Activated naive CD4-positive, alpha-beta T cell treated with anti-CD3 and anti-CD28 coated beads, Interleukin-2, amount 10 ng/mL, durations not matched to agents 7 days and 5 days (primary cell): ENCODE measurements at regions of chr2 and their contacts with region 1.

Region 1: GRCh38 chr2:30165050-30165520 is 18.3 kb downstream of the YPEL5 start:
- DNase-seq: peak; percentile 81
- H3K4me3 Mint-ChIP-seq: no peak overlapping the region
- H3K27ac Mint-ChIP-seq: no peak overlapping the region
- H3K4me1 Mint-ChIP-seq: no peaks in the 10 kb centered on the region
- H3K27me3 Mint-ChIP-seq: peaks cover 4% of the 10 kb centered on the region

Region 2: DNA sequence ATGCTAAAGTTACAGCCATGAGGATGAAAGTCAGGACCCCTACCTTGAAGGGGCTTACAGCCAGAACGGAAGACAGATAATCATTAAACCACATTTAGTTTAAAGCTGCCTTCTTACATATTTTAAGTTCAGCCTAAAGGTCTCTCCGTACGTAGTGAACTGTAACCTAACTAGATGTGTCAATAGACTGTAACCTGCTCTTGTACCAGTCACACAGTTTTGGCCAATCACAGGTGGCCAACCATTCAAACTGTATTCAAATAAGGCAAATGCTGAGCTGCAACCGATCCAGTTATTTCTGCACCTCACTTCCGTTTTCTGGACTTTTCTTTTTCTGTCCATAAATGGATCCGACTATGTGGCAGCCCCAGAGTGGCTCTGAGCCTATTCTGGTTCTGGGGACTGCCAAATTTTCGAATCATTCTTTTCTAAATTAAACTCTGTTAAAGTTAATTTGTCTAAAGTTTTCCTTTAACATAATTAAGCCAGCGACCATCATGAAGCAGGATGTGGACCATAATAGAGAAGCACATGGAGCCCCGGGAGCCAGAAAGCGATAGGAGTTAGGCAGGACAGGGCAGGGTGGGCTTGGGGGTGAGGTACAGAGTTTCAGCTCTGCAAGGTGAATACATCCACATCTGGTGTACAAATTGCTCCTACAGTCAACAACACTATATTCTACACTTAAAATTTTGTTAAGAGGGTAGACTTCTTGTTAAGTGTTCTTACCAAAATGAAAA is 66.6 kb before region 1 on chr2:
- CTCF ChIA-PET with region 1: no interaction called
- DNase-seq: no peak
- H3K4me3 Mint-ChIP-seq: no peak overlapping the region
- H3K27ac Mint-ChIP-seq: no peak overlapping the region
- H3K4me1 Mint-ChIP-seq: no peaks in the 10 kb centered on the region
- H3K27me3 Mint-ChIP-seq: peaks cover 19% of the 10 kb centered on the region

Region 3: GRCh38 chr2:30178618-30179434 is 13.7 kb after region 1 on chr2:
- CTCF ChIA-PET with region 1: interaction called, 11 read pairs
- DNase-seq: no peak
- H3K4me3 Mint-ChIP-seq: no peak overlapping the region
- H3K27ac Mint-ChIP-seq: no peak overlapping the region
- H3K4me1 Mint-ChIP-seq: peaks cover 3% of the 10 kb centered on the region
- H3K27me3 Mint-ChIP-seq: peaks cover 15% of the 10 kb centered on the region

Region 4: GRCh38 chr2:30208452-30208851 is 43.4 kb after region 1 on chr2:
- CTCF ChIA-PET with region 1: interaction called, 51 read pairs
- DNase-seq: peak; percentile 56
- H3K4me3 Mint-ChIP-seq: no peak overlapping the region
- H3K27ac Mint-ChIP-seq: peak overlapping the region; percentile 63
- H3K4me1 Mint-ChIP-seq: peaks cover 20% of the 10 kb centered on the region
- H3K27me3 Mint-ChIP-seq: peaks cover 23% of the 10 kb centered on the region

Region 5: DNA sequence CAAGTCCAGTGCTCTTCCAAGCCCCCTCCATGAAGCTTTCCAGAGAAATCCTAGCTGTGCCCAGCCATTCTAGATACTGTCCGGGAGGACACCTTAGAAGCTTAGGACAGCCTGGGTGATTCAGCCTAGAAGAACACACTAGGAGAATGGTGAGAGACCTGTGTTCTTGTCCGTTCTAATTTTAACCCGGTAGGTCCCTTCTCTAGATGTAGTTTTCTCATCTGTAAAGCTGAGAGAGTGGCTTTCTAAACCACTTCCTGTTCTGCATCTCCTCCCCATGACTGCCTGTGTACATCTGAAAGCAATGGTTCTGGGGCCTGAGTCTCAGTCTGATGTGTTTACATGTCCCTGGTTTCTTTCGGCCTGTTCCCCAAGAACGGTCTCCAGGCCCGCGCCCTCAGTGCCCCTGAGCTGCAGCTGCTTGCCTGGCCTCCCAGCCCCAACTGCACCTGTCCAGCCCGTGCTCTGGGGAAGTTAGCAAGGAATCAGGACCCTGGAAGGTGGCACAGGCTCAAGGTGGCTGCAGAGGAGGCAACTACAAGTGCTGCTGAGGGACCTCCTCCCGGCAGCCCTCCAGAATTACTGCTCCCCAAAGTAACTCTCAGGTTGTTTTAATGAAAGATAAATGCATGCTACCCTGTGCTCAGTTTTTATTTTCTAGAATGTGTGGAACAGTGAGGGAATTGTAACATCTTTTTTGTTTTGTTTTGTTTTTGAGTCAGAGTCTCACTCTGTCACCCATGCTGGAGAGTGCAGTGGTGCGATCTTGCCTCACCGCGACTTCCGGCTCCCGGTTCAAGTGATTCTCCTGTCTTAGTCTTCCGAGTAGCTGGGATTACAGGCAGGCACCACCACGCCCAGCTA is 172.1 kb after region 1 on chr2:
- CTCF ChIA-PET with region 1: interaction called, 15 read pairs
- DNase-seq: peak; percentile 74
- H3K4me3 Mint-ChIP-seq: peak overlapping the region; percentile 72
- H3K27ac Mint-ChIP-seq: peak overlapping the region; percentile 99
- H3K4me1 Mint-ChIP-seq: peaks cover 72% of the 10 kb centered on the region
- H3K27me3 Mint-ChIP-seq: no peaks in the 10 kb centered on the region

Region 6: DNA sequence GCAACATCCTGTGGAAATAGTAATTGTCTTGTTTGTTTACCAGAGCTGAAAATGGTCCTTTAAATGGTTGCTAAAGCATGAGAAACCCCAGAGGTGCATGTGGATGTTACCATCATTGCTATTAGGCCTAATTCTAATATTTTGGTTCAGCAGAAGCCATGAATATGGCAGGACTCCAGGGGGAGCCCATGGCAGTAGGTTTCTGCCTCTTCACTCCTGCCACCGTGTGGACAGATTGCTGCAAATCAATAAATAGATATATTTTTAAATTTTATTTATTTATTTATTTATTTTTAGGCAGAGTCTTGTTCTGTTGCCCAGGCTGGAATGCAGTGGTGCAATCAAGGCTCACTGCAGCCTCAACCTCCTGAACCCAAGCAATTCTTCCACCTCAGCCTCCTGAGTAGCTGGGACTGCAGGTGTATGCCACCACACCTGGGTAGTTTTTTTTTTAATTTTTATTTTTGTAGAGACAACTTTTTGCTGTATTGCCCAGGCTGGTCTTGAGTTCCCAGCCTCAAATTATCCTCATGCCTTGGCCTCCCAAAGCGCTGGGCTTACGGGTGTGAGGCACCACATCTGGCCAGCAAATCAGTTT is 697.1 kb after region 1 on chr2:
- CTCF ChIA-PET with region 1: interaction called, 14 read pairs
- DNase-seq: peak; percentile 61
- H3K4me3 Mint-ChIP-seq: no peak overlapping the region
- H3K27ac Mint-ChIP-seq: no peak overlapping the region
- H3K4me1 Mint-ChIP-seq: peaks cover 13% of the 10 kb centered on the region
- H3K27me3 Mint-ChIP-seq: peaks cover 22% of the 10 kb centered on the region